GM10248 (cell line): ENCODE measurements at regions of chr5 and their contacts with region 1.

Region 1: GRCh38 chr5:75681125-75681830 is 36.0 kb downstream of the POC5 start:
- DNase-seq: peak; percentile 29
- CTCF ChIP-seq: peak; percentile 58

Region 2: DNA sequence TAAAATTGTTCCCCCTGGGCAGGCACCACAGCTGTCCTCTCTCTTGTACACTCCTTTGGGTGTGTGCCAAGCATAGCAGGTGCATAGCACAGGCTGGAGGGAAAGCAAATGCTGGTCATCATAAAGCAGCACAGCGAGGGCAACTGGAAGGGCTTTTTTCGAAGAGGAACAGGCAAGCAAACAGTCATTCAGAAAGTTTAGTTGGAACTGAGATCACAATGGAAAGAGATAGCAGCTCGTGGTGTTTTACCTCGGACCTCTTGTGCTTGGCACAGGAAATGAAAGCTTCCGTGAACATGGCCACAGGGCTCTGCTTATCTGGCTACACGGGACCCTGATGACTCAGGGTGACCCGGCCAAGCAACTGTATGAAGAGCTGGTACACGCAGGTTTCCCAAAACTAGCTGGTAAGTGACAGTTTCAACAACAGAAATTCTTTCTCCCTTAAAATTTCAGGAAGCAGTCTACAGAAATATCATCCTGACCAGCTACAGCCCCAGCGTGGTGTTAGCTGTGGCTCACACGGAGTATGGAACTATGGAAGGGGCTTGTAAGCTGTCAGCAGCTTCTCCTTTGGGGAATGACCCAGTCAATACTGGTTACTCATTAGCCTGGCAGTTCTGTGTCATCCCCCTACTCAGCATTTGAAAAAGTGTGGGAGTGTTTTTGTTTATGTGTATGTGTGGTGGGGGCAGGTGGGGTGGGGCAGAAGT is 12.1 kb before region 1 on chr5:
- CTCF ChIA-PET with region 1: interaction called, 72 read pairs
- POLR2A ChIA-PET with region 1: no interaction called
- DNase-seq: peak; percentile 63
- CTCF ChIP-seq: no peak

Region 3: DNA sequence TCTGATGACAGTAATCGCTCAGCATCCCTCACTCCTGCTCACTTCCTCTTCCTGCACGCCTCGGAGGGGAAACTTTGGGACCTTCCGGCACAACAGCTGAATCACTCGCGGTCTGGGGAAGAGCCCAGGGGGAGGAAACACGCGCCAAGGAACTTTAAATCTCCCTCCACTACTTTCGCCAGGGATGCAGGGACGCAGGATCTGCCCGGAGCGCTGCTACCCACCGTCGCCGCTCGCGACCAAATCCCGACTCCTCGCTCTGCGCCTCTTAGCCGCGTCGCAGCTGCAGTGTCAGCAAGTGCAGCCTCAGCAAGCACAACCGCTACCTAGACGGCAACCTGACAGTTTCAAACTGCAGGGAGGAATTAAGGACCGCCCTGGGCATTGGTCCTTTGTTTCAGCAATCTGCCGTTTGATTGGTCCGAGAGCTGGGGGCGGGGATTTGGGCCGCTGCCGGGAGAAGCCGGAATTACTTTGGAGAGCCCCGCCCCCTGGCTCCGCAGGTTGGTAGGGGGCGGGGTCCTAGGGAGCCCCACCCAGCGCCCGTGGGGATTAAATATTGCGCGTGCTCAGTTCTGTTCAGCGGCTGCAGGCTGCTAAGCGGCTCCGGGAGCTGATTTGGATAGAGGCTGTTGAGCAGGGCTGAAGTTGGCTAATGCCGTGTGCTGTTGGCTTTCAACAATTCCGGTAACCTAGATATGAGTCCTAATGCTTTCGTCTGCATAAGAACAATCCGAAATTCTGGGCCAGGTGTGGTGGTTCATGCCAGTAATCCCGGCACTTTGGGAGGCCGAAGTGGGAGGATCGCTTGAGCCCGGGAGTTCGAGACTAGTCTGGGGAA is 36.0 kb after region 1 on chr5 and contains the start of gene POC5:
- CTCF ChIA-PET with region 1: interaction called, 10 read pairs
- POLR2A ChIA-PET with region 1: no interaction called
- DNase-seq: peak; percentile 97
- CTCF ChIP-seq: no peak

Region 4: DNA sequence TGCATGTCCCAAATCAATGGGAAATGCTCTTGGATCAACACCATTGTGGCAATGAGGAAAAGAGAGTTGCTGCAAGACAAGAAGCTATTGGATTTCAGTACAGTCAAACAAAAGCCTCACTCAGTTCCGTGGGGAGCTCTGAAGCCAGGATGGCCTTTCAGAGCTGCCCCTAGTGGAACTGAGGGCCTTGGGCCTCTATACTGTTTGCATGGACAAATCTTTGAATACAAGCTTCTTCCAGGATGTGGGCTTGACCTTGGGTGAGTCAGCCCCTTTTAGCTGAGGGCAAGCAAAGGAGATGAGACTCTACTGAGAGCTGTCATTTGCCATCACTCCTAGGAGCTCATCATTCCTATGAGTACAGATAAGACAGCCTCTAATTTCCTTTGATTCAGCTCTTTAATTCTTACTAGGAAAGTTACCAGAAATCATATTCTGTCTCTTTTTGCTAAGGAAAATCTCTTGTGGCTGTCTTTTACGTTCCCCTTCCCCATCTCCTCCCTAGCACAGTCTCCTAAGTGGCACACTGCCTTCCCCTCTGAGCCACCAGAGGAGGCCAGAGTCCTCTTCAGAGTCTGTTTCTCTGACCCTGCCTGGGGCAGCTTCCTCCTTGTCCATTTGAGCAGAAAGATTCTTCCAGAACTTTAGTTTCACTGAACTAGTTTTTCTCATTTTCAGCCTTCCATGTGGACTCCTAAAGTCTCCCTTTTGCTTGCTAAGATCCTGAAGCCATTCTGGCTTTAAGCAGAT is 204.7 kb after region 1 on chr5:
- CTCF ChIA-PET with region 1: no interaction called
- POLR2A ChIA-PET with region 1: no interaction called
- DNase-seq: peak; percentile 11
- CTCF ChIP-seq: peak; percentile 60